Activated B cell treated with CpG ODN at 0.5 μM for 24 hours (primary cell): ENCODE measurements at regions of chr14 and their contacts with region 1.

Region 1: DNA sequence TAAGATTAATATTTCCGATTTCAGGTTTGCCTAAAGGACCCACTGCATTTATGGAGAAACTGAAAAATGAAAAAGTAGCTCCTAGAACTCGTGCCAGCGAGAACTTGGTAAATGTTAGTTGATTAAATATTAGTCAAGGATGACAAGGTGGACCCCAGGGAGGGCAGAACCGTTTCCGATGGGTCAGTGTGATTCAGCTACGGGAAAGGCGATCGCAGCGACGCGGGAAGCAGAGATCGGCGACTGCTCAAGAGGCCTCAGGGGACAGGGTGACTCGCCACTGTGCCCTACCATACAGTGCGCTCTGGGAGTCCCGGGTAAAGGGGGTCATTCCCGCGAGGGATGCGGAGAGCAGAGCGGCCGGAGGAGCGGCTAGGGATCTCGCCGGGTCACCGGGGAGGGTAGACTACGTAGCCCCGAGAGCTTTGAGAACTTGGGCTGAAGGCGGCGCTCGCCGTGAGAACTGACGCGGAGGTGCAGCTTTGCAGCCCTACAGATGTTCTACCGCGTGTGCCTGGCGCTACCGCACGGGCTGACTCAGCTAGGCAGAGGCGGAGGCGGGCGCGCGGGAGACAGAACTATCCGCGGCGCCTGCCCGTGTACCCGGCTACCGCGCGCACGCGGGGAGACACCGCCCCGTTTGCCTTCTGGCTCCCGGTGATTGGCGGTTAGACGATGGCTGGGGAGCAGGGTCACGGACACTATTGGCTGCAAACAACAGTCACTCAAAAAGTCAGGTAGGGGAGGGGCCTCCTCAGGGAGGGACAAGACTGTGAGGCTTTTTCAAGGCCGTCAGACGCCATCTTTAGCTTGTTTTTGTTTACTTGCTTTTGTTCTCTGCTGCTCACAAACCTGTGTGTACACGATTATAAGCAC is 3.2 kb downstream of the C14orf93 start:
- DNase-seq: peak; percentile 90
- ATAC-seq: peak; percentile 92
- H3K4me3 Mint-ChIP-seq: peak overlapping the region; percentile 94
- H3K27ac Mint-ChIP-seq: peak overlapping the region; percentile 97
- H3K4me1 Mint-ChIP-seq: peaks cover 47% of the 10 kb centered on the region
- H3K27me3 Mint-ChIP-seq: no peaks in the 10 kb centered on the region
- CTCF ChIP-seq: no peak

Region 2: GRCh38 chr14:22226381-22226780 is 780.4 kb before region 1 on chr14:
- CTCF ChIA-PET with region 1: no interaction called
- POLR2A ChIA-PET with region 1: no interaction called
- intact Hi-C with region 1: loop called (anchors 1 kb)
- DNase-seq: no peak
- ATAC-seq: peak; percentile 85
- H3K4me3 Mint-ChIP-seq: peak overlapping the region; percentile 64
- H3K27ac Mint-ChIP-seq: peak overlapping the region; percentile 81
- H3K4me1 Mint-ChIP-seq: peaks cover 53% of the 10 kb centered on the region
- H3K27me3 Mint-ChIP-seq: peaks cover 8% of the 10 kb centered on the region
- CTCF ChIP-seq: no peak

Region 3: DNA sequence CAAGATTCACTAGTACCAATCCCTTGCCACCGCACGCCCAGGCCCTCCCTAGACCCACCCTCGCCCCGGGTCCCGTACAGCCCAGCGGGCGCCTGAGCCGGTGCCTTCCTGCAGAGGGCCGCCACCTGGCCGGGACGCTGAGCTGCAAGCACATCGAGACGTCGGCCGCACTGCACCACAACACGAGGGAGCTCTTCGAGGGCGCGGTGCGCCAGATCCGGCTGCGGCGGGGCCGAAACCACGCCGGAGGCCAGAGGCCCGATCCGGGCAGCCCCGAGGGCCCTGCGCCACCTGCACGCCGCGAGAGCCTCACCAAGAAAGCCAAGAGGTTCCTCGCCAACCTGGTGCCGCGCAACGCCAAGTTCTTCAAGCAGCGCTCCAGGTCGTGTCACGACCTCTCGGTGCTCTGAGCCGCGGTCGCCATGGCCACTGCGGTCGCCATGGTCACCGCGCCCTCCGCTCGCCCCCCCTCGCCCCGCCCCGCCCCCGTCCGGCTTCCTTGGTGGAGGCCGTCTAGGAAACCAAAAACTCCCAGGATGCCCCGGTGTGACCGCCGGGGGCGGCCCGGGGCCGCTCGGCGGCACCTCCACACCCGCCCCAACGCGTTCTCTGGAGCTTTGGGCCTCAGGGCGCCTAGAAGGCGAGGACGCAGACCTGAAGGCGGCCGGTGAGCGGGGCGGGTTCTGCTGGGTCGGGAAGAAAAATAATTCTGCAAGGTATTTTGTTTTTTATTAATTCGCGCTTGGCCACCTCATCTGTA is 120.1 kb before region 1 on chr14:
- CTCF ChIA-PET with region 1: no interaction called
- POLR2A ChIA-PET with region 1: interaction called, 3 read pairs
- intact Hi-C with region 1: loop called (anchors 5 kb)
- DNase-seq: peak; percentile 71
- ATAC-seq: peak; percentile 55
- H3K4me3 Mint-ChIP-seq: peak overlapping the region; percentile 90
- H3K27ac Mint-ChIP-seq: peak overlapping the region; percentile 97
- H3K4me1 Mint-ChIP-seq: peaks cover 80% of the 10 kb centered on the region
- H3K27me3 Mint-ChIP-seq: no peaks in the 10 kb centered on the region
- CTCF ChIP-seq: no peak

Region 4: DNA sequence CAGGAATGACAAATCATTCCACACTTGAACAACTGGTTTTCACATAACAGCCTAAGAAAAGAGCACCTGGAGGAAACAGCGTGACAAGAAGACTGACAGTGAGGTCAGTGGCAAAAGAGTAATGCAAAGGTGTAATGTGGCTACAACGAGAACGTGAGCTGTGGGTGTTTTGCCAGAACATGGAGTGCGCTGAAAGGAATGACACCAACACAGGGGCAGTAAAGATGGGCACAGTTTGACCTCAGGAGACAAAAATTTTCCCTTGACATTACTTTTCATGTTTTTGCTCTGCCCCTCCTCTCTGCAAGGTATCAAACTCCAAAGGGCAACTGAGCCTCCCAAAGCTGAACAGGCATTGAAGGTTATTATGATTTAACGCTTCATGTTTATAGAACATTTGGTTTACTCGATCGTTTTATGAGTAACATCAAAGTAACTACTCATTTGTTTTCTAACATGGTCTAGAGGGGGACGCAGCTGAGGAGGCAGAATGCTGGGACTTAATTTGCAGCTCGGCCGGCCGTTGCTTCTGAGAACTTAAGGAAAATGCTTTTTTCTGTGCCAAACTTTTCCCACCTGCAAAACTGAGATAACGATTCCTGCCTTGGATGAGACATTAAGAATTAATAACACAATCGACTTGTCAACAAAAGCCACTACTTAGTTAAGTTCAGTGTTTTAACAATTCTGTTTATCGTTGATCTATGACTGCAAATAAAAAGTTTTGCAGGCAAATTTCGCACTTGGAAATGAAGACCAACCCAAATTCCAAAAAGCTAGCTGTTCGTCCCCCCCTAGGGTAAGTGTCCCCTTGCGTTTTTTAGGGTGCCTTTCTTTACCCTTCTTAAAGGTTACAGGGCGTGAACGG is 50.8 kb before region 1 on chr14:
- CTCF ChIA-PET with region 1: no interaction called
- POLR2A ChIA-PET with region 1: interaction called, 10 read pairs
- intact Hi-C with region 1: no loop called
- DNase-seq: no peak
- ATAC-seq: no peak
- H3K4me3 Mint-ChIP-seq: peak overlapping the region; percentile 90
- H3K27ac Mint-ChIP-seq: peak overlapping the region; percentile 86
- H3K4me1 Mint-ChIP-seq: peaks cover 13% of the 10 kb centered on the region
- H3K27me3 Mint-ChIP-seq: no peaks in the 10 kb centered on the region
- CTCF ChIP-seq: no peak

Region 5: DNA sequence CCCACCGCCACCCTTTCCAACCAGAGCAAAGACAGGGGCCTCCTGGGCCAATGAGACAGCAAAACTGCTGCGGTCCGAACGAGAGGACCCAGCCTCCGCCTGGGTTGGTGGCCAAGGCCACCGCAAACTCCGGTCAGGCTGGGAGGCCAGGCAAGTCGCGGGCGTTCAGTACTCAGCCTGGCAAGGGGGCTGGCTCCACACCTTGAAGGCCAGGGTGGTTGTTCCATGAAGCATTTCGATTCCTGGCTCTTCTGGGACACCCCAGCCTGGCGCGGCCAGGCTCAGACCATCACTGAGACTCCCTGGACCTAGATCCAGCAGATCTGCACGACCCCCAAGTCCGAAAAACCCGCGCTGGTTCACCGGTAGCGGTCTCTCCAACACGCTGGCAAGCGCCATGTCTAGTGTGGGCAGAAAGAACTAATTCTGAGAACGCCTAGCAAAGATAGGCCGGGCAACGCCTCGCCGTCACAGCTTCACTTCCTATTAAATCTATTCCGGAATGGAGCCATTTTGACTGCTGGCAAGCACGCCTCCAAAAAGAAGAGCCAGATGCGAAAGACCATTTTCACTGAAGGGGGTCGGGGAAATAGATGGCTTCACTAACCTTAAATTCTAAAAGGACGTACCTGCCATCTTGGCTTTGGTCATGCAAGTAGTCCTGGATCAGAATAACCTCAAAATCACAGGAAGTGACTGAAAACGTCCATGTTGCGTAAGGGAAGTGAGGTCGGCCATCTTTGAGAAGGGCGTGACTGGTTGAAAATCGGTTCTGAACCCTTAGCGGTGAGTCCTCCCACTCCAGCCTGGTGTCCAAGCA is 27.9 kb after region 1 on chr14 and contains the start of gene PSMB5:
- CTCF ChIA-PET with region 1: interaction called, 3 read pairs
- POLR2A ChIA-PET with region 1: interaction called, 11 read pairs
- intact Hi-C with region 1: loop called (anchors 1 kb)
- DNase-seq: peak; percentile 67
- ATAC-seq: peak; percentile 93
- H3K4me3 Mint-ChIP-seq: peak within 1 kb of the TSS; percentile 84
- H3K27ac Mint-ChIP-seq: peak within 1 kb of the TSS; percentile 96
- H3K4me1 Mint-ChIP-seq: peaks cover 29% of the 10 kb centered on the region
- H3K27me3 Mint-ChIP-seq: no peaks in the 10 kb centered on the region
- CTCF ChIP-seq: no peak
- total RNA-seq, gene PSMB5: 53.3 and 67.5 TPM in 2 replicates

Region 6: DNA sequence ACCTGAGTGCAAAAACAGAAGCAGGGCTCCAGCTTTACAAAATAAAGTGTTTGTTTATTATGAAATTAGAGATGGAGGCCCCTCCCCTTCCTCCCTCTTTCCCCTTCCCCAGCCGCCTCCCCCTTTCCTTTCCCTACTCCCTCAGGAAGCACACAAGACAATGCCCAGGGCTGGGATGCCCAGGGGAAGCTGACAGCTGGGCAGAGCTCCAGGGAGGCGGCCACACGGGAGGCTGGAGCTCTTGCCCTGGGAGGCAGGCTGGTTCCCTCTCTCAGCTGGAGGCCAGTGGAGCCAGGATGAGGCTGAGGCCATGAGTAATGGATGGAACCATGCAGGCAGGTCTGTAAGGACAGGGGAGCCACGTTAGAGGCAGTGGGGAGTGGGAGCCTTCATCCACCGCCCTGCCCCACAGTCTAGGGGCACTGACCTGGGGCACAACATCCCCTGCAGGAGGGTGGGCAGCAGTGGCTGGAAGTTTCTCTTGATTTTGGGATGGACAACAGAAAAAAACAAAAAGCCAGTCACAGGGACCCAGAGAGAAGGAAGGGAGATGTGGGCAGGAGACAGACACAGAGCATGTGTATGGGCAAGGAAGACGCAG is 40.4 kb after region 1 on chr14:
- CTCF ChIA-PET with region 1: no interaction called
- POLR2A ChIA-PET with region 1: no interaction called
- intact Hi-C with region 1: no loop called
- DNase-seq: no peak
- ATAC-seq: no peak
- H3K4me3 Mint-ChIP-seq: no peak overlapping the region
- H3K27ac Mint-ChIP-seq: no peak overlapping the region
- H3K4me1 Mint-ChIP-seq: no peaks in the 10 kb centered on the region
- H3K27me3 Mint-ChIP-seq: peaks cover 4% of the 10 kb centered on the region
- CTCF ChIP-seq: no peak

Region 7: DNA sequence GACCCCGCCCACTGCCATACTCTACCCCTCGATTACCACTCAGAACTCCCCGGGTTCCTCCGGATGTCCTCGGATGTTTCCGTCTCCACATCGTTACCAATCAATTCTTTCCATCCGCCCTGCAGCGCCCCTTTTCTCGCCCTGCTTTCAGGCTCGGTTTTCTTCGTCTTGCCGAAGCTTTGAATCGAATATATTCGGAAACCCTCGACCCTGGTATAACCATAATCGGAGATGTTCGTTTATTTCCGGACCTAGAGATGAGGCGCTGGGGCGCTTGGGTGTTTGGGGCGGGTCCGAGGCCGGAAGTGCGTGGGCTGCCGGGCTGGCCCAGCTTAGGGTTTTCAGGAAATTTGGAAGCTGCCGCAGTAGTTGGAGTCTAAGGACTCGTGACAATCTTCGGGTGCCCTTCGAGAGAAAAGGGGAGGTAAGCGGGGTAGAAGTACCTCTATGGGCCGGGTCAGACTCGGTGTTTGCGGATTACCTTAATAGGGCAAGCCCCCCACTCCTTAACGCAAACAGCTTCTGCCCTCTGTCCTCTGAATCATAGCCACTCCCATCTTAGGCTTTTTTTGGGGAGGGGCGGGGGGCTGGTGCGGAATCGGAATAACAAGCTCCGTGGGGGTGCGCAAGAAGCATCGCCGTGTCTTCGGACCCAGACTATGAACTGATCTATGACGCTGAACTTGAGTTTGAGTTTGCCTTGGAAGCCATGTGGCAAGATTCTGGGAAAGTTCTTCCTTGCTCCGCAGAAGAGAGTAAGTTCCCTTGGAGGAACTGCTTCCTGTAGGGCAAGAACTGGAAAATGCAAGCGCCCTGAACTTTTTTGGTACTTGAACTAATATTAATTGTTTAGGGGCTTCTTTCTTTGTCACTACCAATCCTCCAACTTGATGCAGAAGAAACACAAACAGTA is 88.7 kb after region 1 on chr14 and contains the start of gene C14orf119:
- CTCF ChIA-PET with region 1: no interaction called
- POLR2A ChIA-PET with region 1: interaction called, 22 read pairs
- intact Hi-C with region 1: loop called (anchors 1 kb)
- DNase-seq: peak; percentile 77
- ATAC-seq: peak; percentile 87
- H3K4me3 Mint-ChIP-seq: no peak within 1 kb of the TSS
- H3K27ac Mint-ChIP-seq: no peak within 1 kb of the TSS
- H3K4me1 Mint-ChIP-seq: peaks cover 34% of the 10 kb centered on the region
- H3K27me3 Mint-ChIP-seq: no peaks in the 10 kb centered on the region
- CTCF ChIP-seq: no peak
- total RNA-seq, gene C14orf119: 35.3 and 36.0 TPM in 2 replicates